ENCODE measurements at regions of chr1 and their contacts with region 1.

Region 1: DNA sequence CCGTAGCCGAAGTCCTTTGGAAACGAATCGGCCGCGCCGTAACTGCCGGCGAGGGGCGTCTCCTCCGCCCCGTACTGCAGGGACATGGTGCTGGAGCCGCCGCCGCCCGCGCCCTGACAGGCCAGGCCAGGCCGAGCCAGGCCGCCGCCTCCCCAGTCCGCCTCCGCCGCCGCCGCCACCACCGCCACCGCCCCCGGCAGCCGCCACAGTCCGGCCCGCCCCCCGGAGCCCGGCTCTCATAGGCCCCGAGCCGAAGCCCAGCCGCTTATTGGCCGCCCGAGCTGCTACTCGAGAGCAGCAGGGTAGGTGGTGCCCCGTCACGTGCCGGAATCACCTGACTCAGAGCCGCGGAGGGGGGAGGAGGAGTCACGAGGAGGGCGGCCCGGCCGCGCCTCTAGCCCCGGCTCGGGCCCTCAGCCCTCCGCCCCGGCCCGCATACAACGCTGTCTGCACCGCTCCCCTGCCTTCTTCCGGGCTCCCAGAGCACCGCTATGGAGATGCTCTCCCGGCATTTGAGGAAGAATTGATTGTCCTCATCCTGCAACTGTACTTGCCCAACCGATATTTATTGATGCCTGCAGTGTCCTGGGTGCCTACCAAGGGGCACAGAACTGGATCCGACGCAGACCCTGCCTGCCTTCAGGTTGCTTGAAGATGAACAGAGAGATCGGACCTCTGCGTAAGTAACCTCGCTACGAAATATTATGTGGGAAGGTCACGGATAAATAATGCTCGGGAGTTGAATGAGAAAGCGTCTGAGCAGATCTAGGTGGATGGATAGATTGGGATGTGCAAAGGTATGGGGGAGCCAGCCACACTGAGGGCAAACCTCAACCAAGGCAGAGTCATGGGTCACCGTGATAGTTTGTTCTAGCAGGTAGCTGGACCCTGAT is at the start of gene RRAGC:
- DNase-seq: peak; percentile 80
- ATAC-seq: peak; percentile 94
- H3K4me3 ChIP-seq: peak within 1 kb of the TSS; percentile 95
- H3K27ac ChIP-seq: peak within 1 kb of the TSS; percentile 51
- H3K4me1 ChIP-seq: peaks cover 8% of the 10 kb centered on the region; the same call in 1 of the 2 replicates
- H3K27me3 ChIP-seq: no peaks in the 10 kb centered on the region
- CTCF ChIP-seq: no peak
- EP300 ChIP-seq: peak in 1 of 2 experiments; percentile 52; a peak in 1 of 4 replicates
- POLR2A ChIP-seq: peak; percentile 81
- RAD21 ChIP-seq: no peak
- polyA plus RNA-seq, gene RRAGC: 16.8 to 22.1 TPM

Region 2: DNA sequence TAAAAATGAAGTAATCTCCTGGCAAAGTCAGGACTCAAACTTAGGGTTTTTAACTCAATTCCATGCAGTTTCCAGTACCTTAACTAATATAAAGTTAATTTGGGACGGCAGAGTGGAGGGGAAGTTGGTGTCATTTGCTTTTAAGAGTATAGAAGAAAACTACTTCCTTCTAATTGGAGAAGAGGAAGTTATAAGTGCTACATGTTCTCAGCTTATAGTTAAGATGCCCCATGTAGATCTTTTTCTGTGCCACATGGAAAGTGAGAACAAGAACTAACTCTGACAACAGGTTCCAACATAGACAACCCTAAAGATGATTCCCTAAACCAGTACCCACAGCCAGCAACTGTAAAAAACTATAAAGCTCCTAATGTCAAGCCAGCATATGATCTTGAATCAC is 11.7 kb before region 1 on chr1:
- CTCF ChIA-PET with region 1: interaction called, 9 read pairs
- POLR2A ChIA-PET with region 1: interaction called, 4 read pairs
- RAD21 ChIA-PET with region 1: interaction called, 5 read pairs
- SMC1A ChIA-PET with region 1: interaction called, 11 read pairs
- in situ Hi-C with region 1: no loop called
- intact Hi-C with region 1: no loop called
- DNase-seq: no peak
- ATAC-seq: peak; percentile 65
- H3K4me3 ChIP-seq: no peak overlapping the region
- H3K27ac ChIP-seq: 0 out of 2 replicates have a peak overlapping the region, but pooled peaks have one; percentile 1
- H3K4me1 ChIP-seq: peaks cover 2% of the 10 kb centered on the region
- H3K27me3 ChIP-seq: no peaks in the 10 kb centered on the region
- CTCF ChIP-seq: no peak
- EP300 ChIP-seq: no peak
- POLR2A ChIP-seq: no peak
- RAD21 ChIP-seq: no peak

Region 3: GRCh38 chr1:38873027-38873969 is 13.5 kb after region 1 on chr1 and contains the start of gene MYCBP:
- CTCF ChIA-PET with region 1: interaction called, 4 read pairs
- POLR2A ChIA-PET with region 1: interaction called, 14 read pairs
- RAD21 ChIA-PET with region 1: interaction called, 4 read pairs
- SMC1A ChIA-PET with region 1: interaction called, 11 read pairs
- in situ Hi-C with region 1: no loop called
- intact Hi-C with region 1: loop called (anchors 2 kb)
- DNase-seq: peak; percentile 92
- ATAC-seq: peak; percentile 99
- H3K4me3 ChIP-seq: peak within 1 kb of the TSS; percentile 82
- H3K27ac ChIP-seq: peak within 1 kb of the TSS; percentile 78
- H3K4me1 ChIP-seq: peaks cover 17% of the 10 kb centered on the region
- H3K27me3 ChIP-seq: no peaks in the 10 kb centered on the region
- CTCF ChIP-seq: 0 out of 6 replicates have a peak, but pooled peaks of 1 of the 3 experiments have one; percentile 1
- EP300 ChIP-seq: no peak
- POLR2A ChIP-seq: peak; percentile 77
- RAD21 ChIP-seq: no peak
- polyA plus RNA-seq, gene MYCBP: 124 to 152 TPM

Region 4: GRCh38 chr1:39026051-39026865 is 166.5 kb after region 1 on chr1 and contains the start of gene NDUFS5:
- CTCF ChIA-PET with region 1: interaction called, 5 read pairs
- POLR2A ChIA-PET with region 1: interaction called, 3 read pairs
- RAD21 ChIA-PET with region 1: interaction called, 16 read pairs
- SMC1A ChIA-PET with region 1: interaction called, 6 read pairs
- in situ Hi-C with region 1: no loop called
- intact Hi-C with region 1: loop called (anchors 10 kb)
- DNase-seq: peak; percentile 65
- ATAC-seq: peak; percentile 97
- H3K4me3 ChIP-seq: peak within 1 kb of the TSS; percentile 91
- H3K27ac ChIP-seq: peak within 1 kb of the TSS; percentile 90
- H3K4me1 ChIP-seq: peaks cover 7% of the 10 kb centered on the region
- H3K27me3 ChIP-seq: no peaks in the 10 kb centered on the region
- CTCF ChIP-seq: no peak
- EP300 ChIP-seq: 0 out of 4 replicates have a peak, but pooled peaks of 1 of the 2 experiments have one; percentile 48
- POLR2A ChIP-seq: peak; percentile 94
- RAD21 ChIP-seq: no peak
- polyA plus RNA-seq, gene NDUFS5: 1,576 to 1,578 TPM

Region 5: DNA sequence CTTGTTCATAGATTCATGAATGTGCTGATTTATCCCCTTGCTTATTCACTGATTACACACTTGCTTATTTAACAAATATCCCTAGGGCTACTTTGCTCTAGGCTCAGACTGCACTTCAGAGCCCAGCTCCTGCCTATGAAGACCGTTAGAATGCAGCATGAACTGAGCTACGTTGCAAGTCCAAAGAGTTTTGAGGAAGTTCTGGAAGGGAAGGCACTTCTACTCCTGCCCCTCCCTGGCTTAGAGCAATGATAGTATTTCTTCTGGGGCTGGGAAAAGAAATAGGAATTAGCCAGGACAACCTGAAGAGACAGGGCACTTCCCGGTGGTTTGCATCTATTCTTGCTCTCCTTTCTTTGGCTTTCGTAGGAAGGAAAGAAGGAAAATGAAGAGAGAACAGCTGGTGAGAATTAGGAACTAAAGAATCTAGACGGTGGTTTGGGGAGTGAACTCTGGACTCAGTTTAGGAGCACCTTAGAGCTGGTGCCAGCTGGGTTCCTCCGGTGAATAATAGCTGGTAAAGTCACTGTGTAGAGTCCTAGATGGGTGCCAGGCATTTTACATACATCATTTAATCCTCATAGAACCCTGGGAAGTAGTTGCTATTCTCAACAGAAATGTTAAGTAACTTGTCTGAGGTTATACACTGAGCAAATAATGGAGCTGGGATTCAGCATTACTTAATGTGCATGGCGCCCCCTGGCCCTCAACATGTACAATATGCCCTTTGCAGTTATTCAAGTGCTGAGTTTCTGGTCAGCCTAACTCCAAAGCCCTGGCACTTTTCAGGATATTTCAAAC is 232.2 kb after region 1 on chr1:
- CTCF ChIA-PET with region 1: interaction called, 10 read pairs
- POLR2A ChIA-PET with region 1: no interaction called
- RAD21 ChIA-PET with region 1: interaction called, 5 read pairs
- SMC1A ChIA-PET with region 1: interaction called, 6 read pairs
- in situ Hi-C with region 1: no loop called
- intact Hi-C with region 1: loop called (anchors 5 kb)
- DNase-seq: no peak
- ATAC-seq: peak; percentile 89
- H3K4me3 ChIP-seq: no peak overlapping the region
- H3K27ac ChIP-seq: no peak overlapping the region
- H3K4me1 ChIP-seq: peaks cover 6% of the 10 kb centered on the region
- H3K27me3 ChIP-seq: no peaks in the 10 kb centered on the region
- CTCF ChIP-seq: peak; percentile 71 to 78 (median 78)
- EP300 ChIP-seq: no peak
- POLR2A ChIP-seq: no peak
- RAD21 ChIP-seq: peak; percentile 82